AG04450 (cell line): ENCODE measurements at regions of chr6 and their contacts with region 1.

Region 1: DNA sequence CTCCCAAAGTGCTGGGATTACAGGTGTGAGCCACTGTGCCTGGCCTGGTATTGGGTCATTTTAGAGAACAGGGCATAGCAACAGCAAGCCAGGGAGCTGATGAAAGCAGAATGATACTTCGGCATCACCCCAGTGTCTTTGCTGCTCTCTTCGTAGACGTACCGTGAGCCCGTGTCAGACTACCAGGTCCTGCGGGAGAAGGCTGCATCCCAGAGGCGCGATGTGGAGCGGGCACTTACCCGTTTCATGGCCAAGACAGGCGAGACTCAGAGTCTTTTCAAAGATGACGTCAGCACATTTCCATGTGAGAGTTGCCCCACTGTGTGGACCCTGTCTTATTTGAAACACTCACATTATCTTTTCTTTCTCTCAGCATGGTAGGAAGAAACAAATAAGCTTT is 15.8 kb downstream of the TAF8 start:
- DNase-seq: no peak
- H3K4me3 ChIP-seq: no peak overlapping the region
- H3K27ac ChIP-seq: no peak overlapping the region
- H3K27me3 ChIP-seq: no peaks in the 10 kb centered on the region
- CTCF ChIP-seq: no peak

Region 2: DNA sequence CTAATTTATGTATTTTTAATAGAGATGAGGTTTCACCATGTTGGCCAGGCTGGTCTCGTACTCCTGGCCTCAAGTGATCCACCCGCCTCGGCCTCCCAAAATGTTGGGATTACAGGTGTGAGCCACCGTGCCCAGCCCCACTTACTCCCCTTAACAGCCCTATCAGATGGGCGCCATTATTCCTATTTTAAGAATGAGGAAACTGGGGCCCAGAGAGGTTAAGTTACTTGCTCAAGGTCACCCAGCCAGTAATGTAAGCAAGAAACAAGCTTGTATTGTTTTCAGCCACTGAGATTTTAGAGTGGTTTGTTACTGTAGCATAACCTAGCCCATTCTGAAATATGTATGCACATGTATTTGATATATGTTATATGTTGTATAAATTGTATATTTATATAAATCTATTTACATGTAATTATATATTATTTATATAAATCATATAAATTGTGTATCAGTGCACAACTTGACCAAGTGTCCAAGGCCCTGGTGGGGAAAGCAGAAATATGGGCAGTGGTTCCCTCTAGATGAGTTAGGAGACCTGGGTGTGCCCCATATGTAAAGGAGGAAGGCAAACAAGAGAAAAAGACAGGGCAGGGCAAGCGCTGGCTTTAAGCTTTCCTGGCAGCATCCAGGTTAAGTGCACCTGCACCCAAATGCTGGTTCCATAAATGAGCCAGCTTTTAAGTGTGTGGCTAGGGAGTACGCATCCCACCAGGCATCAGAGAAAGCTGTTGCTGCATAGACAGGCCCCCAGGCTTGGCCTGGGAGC is 105.8 kb after region 1 on chr6:
- CTCF ChIA-PET with region 1: interaction called, 10 read pairs
- POLR2A ChIA-PET with region 1: no interaction called
- DNase-seq: no peak
- H3K4me3 ChIP-seq: no peak overlapping the region
- H3K27ac ChIP-seq: no peak overlapping the region
- H3K27me3 ChIP-seq: peaks cover 3% of the 10 kb centered on the region
- CTCF ChIP-seq: no peak